ENCODE measurements at regions of chr6 and their contacts with region 1.

Region 1: GRCh38 chr6:53544470-53545308 is at the start of gene GCLC:
- DNase-seq: peak; percentile 89 to 93
- H3K4me3 ChIP-seq: peak within 1 kb of the TSS; percentile 57 to 95 (median 80)
- H3K27ac ChIP-seq: peak within 1 kb of the TSS; percentile 83; the same call in 1 of the 2 replicates
- H3K4me1 ChIP-seq: peaks cover 3 to 16% (median 7%) of the 10 kb centered on the region in 4 experiments; a peak in 5 of 7 replicates
- H3K27me3 ChIP-seq: peaks cover 0 to 12% (median 8%) of the 10 kb centered on the region in 4 experiments; a peak in 5 of 7 replicates
- CTCF ChIP-seq: peak; percentile 55 to 81 (median 70)
- EP300 ChIP-seq: no peak; a peak in 1 of 3 replicates
- POLR2A ChIP-seq: peak; percentile 53 to 80
- RAD21 ChIP-seq: peak; percentile 56 to 82
- total RNA-seq, gene GCLC: 52.9 and 54.0 TPM in 2 replicates

Region 2: DNA sequence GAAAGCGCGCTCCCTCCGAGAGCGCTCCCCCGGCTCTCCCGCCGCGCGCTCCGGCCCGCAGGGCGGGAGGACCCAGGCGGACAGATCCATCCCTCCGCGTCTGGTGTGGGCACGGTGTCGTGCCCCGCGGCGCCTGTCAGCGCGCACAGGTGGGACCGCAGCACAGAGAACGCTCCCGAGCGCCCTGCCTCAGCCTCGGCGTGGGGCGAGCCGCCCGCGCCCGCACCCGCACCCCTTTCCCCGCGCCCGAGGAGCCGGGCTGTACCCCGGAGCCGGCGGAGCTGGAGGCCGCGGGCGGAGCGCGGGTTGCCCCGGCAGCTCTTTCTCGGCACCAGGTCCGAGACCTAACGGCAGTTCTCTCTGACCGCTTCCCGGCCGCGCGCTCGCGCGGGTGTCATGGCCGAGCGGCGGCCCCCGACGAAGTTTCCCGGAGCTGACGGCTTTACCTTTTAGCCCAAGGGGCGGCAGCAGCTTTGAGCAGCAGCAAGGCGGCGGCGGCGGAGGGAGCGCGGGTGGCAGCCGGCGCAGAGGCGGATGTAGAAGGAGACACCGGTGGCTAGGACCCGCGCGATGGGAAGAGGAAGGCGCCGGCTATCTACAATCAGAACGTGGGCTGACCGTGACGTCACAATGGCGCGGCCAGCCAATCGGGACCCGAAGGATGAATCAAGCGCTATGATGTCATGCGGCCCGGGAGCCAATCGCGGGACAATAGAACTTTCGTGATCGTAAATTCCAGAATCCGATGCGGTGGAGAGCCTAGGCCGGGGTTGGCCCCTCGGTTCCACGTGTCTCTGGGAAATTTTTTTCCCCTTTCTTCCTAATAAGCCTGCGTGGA is 196.1 kb before region 1 on chr6 and contains the start of gene ELOVL5:
- CTCF ChIA-PET with region 1: no interaction called
- POLR2A ChIA-PET with region 1: no interaction called
- DNase-seq: peak; percentile 73 to 97
- H3K4me3 ChIP-seq: peak within 1 kb of the TSS; percentile 66 to 86 (median 83)
- H3K27ac ChIP-seq: peak within 1 kb of the TSS; percentile 59; the same call in 1 of the 2 replicates
- H3K4me1 ChIP-seq: peaks cover 0 to 9% (median 4%) of the 10 kb centered on the region in 4 experiments; a peak in 5 of 7 replicates
- H3K27me3 ChIP-seq: peaks cover 0 to 11% (median 7%) of the 10 kb centered on the region in 4 experiments; a peak in 4 of 7 replicates
- CTCF ChIP-seq: no peak
- EP300 ChIP-seq: no peak
- POLR2A ChIP-seq: peak in 1 of 2 experiments; percentile 60; a peak in 1 of 3 replicates
- RAD21 ChIP-seq: no peak
- total RNA-seq, gene ELOVL5: 151 and 156 TPM in 2 replicates

Region 3: DNA sequence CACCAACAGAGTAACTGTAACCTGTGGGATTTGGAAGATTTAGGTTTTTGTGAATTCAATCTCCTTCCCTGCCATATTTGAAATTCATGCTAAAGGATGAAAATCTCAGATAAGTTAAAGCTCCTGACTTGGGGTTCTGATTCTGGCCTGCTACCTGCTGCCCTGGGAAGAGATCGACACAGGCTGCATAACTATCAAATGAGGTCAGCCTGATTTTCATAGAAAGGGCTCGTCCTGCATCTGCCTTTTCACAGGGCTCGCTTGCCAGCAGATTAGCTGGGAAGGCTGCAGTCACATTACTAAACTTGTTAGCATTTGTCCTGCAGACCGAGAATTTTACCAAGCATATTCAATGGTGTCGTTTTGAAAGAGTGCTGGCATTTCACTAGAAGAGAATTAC is 14.3 kb before region 1 on chr6:
- CTCF ChIA-PET with region 1: interaction called, 4 read pairs
- POLR2A ChIA-PET with region 1: interaction called, 19 read pairs
- DNase-seq: no peak
- H3K4me3 ChIP-seq: no peak overlapping the region
- H3K27ac ChIP-seq: no peak overlapping the region
- H3K4me1 ChIP-seq: peaks cover 9 to 43% (median 30%) of the 10 kb centered on the region in 4 experiments
- H3K27me3 ChIP-seq: no peaks in the 10 kb centered on the region
- CTCF ChIP-seq: no peak
- EP300 ChIP-seq: no peak
- POLR2A ChIP-seq: no peak
- RAD21 ChIP-seq: no peak

Measured in H1 (cell line).